HepG2 (cell line): ENCODE measurements at regions of chr4 and their contacts with region 1.

Region 1: DNA sequence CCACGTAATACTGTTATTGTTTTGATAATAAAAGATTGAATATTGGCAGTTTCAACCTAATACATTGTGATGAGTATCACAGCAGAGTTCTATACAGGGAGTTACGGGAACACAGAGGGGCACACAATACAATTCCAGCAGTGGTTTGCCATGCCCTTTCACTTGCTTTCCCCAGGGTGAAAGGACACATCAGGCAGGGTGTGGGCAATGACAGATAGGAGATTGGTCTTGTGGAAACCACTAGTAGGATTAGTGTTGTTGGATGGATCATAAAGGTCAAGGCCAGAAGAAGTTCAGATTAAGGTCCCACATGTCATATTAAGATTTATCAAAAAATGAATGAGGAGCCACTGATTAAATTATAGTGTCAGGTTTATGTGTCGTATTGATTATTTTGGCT is 8.1 kb downstream of the HSD17B11 start:
- DNase-seq: no peak
- ATAC-seq: no peak
- H3K4me3 ChIP-seq: no peak overlapping the region
- H3K27ac ChIP-seq: no peak overlapping the region
- H3K4me1 ChIP-seq: peaks cover 48% of the 10 kb centered on the region
- H3K27me3 ChIP-seq: no peaks in the 10 kb centered on the region
- CTCF ChIP-seq: no peak
- EP300 ChIP-seq: no peak
- POLR2A ChIP-seq: no peak
- RAD21 ChIP-seq: no peak

Region 2: DNA sequence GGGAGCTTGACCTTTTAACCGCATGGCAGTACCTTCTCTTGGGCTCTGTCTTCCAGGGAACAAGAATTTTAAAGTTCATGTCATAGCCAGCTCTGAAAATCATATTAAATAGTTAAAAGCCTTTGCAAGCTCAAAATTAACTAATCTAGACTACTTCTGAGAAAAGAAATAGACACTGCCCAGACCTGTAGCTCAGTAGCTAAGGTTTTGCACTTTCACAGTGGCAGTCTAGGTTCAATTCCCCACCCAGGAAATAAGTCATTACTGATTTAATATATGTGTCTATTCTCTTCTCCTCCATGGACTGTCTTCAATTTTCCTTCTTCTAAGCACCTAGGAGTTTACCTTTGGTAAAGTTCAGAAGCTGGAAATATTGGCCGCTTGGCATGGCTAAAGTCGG is 19.4 kb before region 1 on chr4:
- CTCF ChIA-PET with region 1: no interaction called
- POLR2A ChIA-PET with region 1: no interaction called
- in situ Hi-C with region 1: no loop called
- intact Hi-C with region 1: loop called (anchors 1 kb)
- DNase-seq: no peak
- ATAC-seq: no peak
- H3K4me3 ChIP-seq: no peak overlapping the region
- H3K27ac ChIP-seq: no peak overlapping the region
- H3K4me1 ChIP-seq: no peaks in the 10 kb centered on the region
- H3K27me3 ChIP-seq: no peaks in the 10 kb centered on the region
- CTCF ChIP-seq: no peak
- EP300 ChIP-seq: no peak
- POLR2A ChIP-seq: no peak
- RAD21 ChIP-seq: no peak